Left cardiac atrium (tissue), 4 donors: ENCODE measurements at regions of chr14 and their contacts with region 1.

Region 1: DNA sequence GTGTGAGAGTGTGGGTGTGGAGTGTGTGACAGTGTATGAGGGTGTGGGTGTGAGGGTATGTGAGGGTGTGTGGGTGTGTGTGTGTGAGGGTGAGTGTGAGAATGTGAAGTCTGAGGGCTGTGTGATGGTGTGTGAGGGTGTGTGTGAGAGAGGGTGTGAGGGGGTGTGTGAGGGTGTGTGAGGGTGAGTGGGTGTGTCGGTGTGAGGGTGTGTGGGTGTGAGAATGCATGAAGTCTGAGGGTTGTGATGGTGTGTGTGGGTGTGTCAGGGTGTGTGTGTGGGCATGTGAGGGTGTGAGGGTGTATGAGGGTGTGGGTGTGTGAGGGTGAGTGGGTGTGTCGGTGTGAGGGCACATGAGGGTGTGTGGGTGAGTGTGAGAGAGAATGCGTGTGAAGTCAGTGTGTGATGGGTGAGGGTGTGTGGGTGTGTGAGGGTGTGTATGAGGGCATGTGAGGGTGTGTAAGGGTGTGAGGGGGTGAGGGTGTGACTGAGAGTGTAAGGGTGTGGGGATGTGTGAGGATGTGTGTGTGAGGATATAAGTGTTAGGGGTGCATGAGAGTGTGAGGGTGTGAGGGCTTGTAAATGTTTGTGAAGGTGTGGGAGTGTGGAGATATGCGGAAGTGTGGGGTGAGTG is 36.4 kb downstream of the TMEM121 start:
- DNase-seq: no peak
- ATAC-seq: no peak

Region 2: DNA sequence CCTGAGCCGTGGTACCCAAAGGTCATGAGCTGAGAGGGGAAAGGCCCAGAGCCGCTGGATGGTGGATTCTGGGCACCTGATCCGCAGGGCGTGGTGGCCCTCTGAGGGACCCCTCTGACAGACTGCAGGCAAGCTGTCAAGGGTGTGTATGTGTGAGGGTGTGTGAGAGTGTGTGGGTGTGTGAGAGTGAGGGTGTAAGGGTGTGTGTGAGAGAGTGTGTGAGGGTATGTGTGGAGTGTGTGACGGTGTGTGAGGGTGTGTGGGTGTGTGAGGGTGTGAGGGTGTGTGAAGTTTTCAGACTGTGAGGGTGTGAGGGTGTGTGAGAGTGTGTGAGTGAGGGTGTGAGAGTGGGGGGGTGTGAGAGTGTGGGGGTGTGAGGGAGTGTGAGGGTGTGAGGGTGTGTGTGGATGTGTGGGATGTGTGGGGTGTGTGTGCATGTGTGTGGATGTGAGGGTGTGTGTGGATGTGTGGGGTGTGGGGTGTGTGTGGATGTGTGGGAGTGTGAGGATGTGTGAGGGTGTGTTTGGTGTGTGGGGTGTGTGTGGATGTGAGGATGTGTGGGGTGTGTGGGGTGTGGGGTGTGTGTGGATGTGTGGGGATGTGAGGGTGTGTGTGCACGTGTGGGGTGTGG is 120.2 kb after region 1 on chr14:
- intact Hi-C with region 1: loop called in 1 of 2 experiments (anchors 10 kb)
- DNase-seq: no peak
- ATAC-seq: no peak